ENCODE measurements at regions of chr12 and their contacts with region 1.

Region 1: GRCh38 chr12:64890873-64891468 is 66.5 kb downstream of the TBC1D30 start:
- DNase-seq: peak; percentile 49 to 67 (median 54)
- ATAC-seq: peak; percentile 90
- H3K4me3 ChIP-seq: no peak overlapping the region
- H3K27ac ChIP-seq: no peak overlapping the region
- H3K4me1 ChIP-seq: no peaks in the 10 kb centered on the region
- H3K27me3 ChIP-seq: 0 out of 5 replicates have a peak, but pooled peaks cover 0 to 4% of the 10 kb centered on the region in 2 experiments
- CTCF ChIP-seq: peak; percentile 57 to 84 (median 66)
- EP300 ChIP-seq: no peak
- POLR2A ChIP-seq: no peak
- RAD21 ChIP-seq: peak; percentile 87 to 90

Region 2: GRCh38 chr12:65100140-65100539 is 209.2 kb after region 1 on chr12:
- CTCF ChIA-PET with region 1: no interaction called
- POLR2A ChIA-PET with region 1: no interaction called
- in situ Hi-C with region 1: no loop called
- intact Hi-C with region 1: loop called (anchors 5 kb)
- DNase-seq: no peak
- ATAC-seq: no peak
- H3K4me3 ChIP-seq: no peak overlapping the region
- H3K27ac ChIP-seq: no peak overlapping the region
- H3K4me1 ChIP-seq: no peaks in the 10 kb centered on the region
- H3K27me3 ChIP-seq: no peaks in the 10 kb centered on the region
- CTCF ChIP-seq: peak in 2 of 3 experiments; percentile 10 to 24; a peak in 2 of 6 replicates
- EP300 ChIP-seq: no peak
- POLR2A ChIP-seq: no peak
- RAD21 ChIP-seq: peak in 1 of 2 experiments; percentile 24; a peak in 1 of 4 replicates

Region 3: DNA sequence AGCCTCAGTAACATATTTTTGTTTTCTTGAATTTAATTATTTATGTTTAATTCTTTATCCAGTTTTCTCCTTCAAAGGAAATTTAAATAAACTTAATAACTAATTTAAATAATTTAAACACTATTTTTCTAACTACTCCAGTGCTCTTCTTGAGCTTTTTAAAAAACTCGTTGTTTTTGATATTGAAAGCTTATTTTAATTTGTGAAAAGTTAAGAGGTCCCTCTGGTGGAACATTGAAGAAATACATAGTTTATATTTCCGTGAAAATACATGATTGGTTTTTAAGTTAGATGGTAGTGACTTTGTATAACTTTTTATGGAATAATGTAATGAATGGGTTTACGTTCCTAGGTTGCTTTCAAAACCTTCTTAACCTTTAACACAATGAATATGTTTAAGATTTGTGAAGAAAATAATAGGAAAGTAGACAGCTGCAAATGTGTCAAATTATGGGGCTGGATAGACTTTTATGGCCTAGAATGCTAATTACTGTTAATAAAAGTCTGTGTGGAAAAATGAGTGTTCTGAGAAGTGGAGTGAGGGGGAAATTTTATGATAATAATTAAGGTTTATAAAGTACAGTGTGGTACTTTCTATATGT is 341.6 kb after region 1 on chr12:
- CTCF ChIA-PET with region 1: interaction called, 5 read pairs
- POLR2A ChIA-PET with region 1: no interaction called
- in situ Hi-C with region 1: no loop called
- intact Hi-C with region 1: loop called (anchors 2 kb)
- DNase-seq: peak in 2 of 4 experiments; percentile 10 to 12
- ATAC-seq: no peak
- H3K4me3 ChIP-seq: no peak overlapping the region
- H3K27ac ChIP-seq: no peak overlapping the region
- H3K4me1 ChIP-seq: no peaks in the 10 kb centered on the region
- H3K27me3 ChIP-seq: no peaks in the 10 kb centered on the region
- CTCF ChIP-seq: peak in 1 of 3 experiments; percentile 48; a peak in 2 of 6 replicates
- EP300 ChIP-seq: no peak
- POLR2A ChIP-seq: no peak
- RAD21 ChIP-seq: peak; percentile 59 to 60

Region 4: DNA sequence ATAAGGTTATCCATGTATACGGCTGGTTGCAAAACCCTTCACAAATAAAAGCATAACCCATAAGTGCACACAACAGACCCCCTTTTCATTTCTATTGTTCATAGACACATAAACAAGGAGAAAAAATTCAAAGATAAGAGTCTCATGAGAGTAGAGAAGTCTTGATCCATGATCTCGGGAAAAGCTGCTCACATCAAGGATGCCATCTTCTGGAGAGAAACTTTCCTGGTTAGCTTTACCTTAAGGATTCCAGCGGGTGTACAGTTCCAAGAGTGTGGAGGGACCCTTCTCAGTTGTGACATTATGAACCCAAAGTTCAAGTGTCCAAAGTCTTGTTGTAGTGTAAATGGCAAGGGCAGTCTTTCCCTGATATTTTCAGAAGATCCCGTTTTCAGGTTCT is 1095.1 kb after region 1 on chr12:
- CTCF ChIA-PET with region 1: interaction called, 5 read pairs
- POLR2A ChIA-PET with region 1: no interaction called
- in situ Hi-C with region 1: loop called (anchors 25 kb)
- intact Hi-C with region 1: loop called (anchors 5 kb)
- DNase-seq: no peak
- ATAC-seq: no peak
- H3K4me3 ChIP-seq: no peak overlapping the region
- H3K27ac ChIP-seq: no peak overlapping the region
- H3K4me1 ChIP-seq: no peaks in the 10 kb centered on the region
- H3K27me3 ChIP-seq: no peaks in the 10 kb centered on the region
- CTCF ChIP-seq: no peak
- EP300 ChIP-seq: no peak
- POLR2A ChIP-seq: no peak
- RAD21 ChIP-seq: no peak

Region 5: DNA sequence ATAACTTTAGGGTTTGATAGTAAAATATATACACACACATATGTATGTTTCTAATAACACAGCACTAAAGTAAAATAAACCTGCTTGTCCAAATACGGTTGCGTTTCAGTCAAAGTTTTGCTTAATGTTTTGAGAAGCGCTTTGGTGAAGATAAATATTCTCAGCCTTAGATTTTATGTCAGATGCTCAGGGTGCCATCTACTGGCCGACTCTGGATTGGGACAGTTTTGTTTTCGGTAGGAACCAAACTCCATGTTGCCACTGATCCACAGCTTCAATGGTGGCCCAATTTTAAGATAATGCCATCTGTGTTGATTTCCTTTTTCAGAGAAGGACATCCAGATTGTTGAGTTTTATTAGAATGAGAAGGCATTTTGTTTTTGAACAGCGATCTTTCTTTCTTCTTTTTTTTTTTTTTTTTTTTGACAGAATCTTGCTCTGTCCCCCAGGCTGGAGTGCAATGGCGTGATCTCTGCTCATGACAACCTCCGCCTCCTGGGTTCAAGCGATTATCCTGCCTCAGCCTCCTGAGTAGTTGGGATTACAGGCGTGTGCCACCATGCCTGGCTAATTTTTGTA is 1196.5 kb after region 1 on chr12:
- CTCF ChIA-PET with region 1: interaction called, 3 read pairs
- POLR2A ChIA-PET with region 1: no interaction called
- in situ Hi-C with region 1: loop called (anchors 10 kb)
- intact Hi-C with region 1: loop called (anchors 10 kb)
- DNase-seq: peak; percentile 23 to 61 (median 32)
- ATAC-seq: peak; percentile 85
- H3K4me3 ChIP-seq: no peak overlapping the region
- H3K27ac ChIP-seq: no peak overlapping the region
- H3K4me1 ChIP-seq: no peaks in the 10 kb centered on the region
- H3K27me3 ChIP-seq: peaks cover 2 to 8% of the 10 kb centered on the region in 2 experiments; a peak in 1 of 5 replicates
- CTCF ChIP-seq: peak; percentile 64 to 76 (median 73)
- EP300 ChIP-seq: no peak
- POLR2A ChIP-seq: no peak
- RAD21 ChIP-seq: peak; percentile 72 to 74